ENCODE measurements at regions of chr3 and their contacts with region 1.

Region 1: DNA sequence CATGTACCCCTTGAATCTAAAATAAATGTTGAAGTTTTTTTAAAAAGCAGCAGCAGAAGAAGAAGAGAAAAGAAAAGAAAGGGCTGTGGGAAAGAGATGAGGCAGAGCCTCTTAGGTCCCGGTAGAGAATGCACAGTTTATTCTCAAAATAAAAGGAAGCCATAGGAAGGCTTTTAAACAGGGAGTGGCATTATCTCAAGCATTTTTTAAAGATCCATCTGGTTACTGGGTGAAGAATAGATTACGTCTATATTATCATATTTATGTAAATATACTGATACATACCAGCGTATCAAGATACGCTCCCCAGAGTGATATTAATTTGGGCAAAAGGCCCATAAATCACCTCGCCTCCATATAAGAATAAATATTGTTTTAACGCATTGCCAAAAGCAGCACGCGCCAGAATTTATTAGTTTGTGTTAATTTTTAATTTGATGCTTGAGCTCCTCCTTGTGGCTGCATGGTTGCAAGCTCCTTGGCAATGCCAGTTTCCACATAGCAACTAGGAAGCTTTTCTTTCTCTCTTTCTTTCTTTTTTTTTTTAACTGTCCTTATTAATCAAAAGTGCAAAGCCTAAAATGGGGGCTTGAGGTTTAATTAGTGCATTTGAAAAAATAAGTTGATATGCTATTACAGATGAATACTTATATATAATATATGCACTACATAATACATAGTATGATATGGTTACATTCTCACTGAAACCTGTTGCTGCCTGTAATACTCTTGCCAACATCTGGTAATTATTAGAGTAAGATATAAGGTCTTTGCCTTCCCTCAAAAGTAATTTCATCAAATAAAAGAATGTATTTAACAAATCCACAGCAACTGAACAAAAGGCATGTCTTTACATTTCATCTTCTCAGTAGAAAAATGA is 242.8 kb upstream of the UBE2E2 start:
- DNase-seq: peak in 1 of 3 donors; percentile 2
- H3K4me3 ChIP-seq: no peak overlapping the region
- H3K4me3 Mint-ChIP-seq: no peak overlapping the region
- H3K27ac ChIP-seq: no peak overlapping the region
- H3K27ac Mint-ChIP-seq: no peak overlapping the region
- H3K4me1 ChIP-seq: no peaks in the 10 kb centered on the region
- H3K4me1 Mint-ChIP-seq: no peaks in the 10 kb centered on the region
- H3K27me3 ChIP-seq: no peaks in the 10 kb centered on the region
- H3K27me3 Mint-ChIP-seq: peaks cover 0 to 7% (median 5%) of the 10 kb centered on the region in 3 donors
- CTCF ChIP-seq: peak; percentile 68

Region 2: GRCh38 chr3:22555753-22556435 is 404.5 kb before region 1 on chr3:
- intact Hi-C with region 1: loop called (anchors 5 to 10 kb)
- DNase-seq: no peak
- H3K4me3 ChIP-seq: no peak overlapping the region
- H3K4me3 Mint-ChIP-seq: no peak overlapping the region
- H3K27ac ChIP-seq: no peak overlapping the region
- H3K27ac Mint-ChIP-seq: no peak overlapping the region
- H3K4me1 ChIP-seq: no peaks in the 10 kb centered on the region
- H3K4me1 Mint-ChIP-seq: no peaks in the 10 kb centered on the region
- H3K27me3 ChIP-seq: no peaks in the 10 kb centered on the region
- H3K27me3 Mint-ChIP-seq: peaks cover 0 to 6% (median 0%) of the 10 kb centered on the region in 3 donors
- CTCF ChIP-seq: no peak

Region 3: DNA sequence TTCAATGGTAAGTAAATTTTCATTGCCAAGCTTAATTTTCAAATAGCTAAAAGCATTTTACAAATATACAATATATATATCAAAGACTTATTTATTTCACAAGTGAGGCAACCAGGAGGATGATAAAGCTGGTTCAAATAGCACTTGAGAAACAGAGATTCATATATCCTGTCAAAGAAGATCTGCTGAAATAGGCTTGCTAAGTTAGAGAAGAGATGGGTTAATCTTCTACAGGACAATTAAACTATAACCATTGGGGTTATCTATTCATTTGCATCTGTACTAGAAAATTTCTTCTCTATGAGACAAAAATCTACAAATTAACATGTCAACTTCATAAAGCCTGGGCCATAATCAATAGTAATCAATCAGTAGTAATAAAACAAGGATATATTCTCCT is 395.0 kb before region 1 on chr3:
- intact Hi-C with region 1: loop called (anchors 5 to 10 kb)
- DNase-seq: no peak
- H3K4me3 ChIP-seq: no peak overlapping the region
- H3K4me3 Mint-ChIP-seq: no peak overlapping the region
- H3K27ac ChIP-seq: no peak overlapping the region
- H3K27ac Mint-ChIP-seq: no peak overlapping the region
- H3K4me1 ChIP-seq: no peaks in the 10 kb centered on the region
- H3K4me1 Mint-ChIP-seq: peaks cover 1% of the 10 kb centered on the region
- H3K27me3 ChIP-seq: no peaks in the 10 kb centered on the region
- H3K27me3 Mint-ChIP-seq: peaks cover 0 to 3% (median 2%) of the 10 kb centered on the region in 3 donors
- CTCF ChIP-seq: no peak

Region 4: DNA sequence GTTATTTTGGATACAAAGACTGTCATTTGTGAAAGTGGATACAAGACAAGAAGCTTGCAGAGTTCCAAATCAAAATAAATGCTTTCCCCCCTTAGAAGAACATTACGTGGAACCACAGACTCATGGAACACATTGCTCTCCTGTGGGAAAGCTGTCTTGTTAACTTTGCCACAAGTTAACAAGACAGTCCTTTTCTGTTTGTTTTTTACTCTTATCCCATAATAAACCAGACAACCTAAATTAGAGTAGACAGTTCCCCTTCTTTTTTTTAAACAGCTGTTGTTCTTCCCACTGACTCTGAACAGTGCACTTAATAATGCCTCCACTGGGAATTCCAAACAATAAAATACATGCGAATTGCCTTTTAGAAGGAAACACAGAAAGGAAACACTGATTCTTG is 12.5 kb before region 1 on chr3:
- intact Hi-C with region 1: no loop called
- DNase-seq: no peak
- H3K4me3 ChIP-seq: no peak overlapping the region
- H3K4me3 Mint-ChIP-seq: no peak overlapping the region
- H3K27ac ChIP-seq: no peak overlapping the region
- H3K27ac Mint-ChIP-seq: no peak overlapping the region
- H3K4me1 ChIP-seq: no peaks in the 10 kb centered on the region
- H3K4me1 Mint-ChIP-seq: no peaks in the 10 kb centered on the region
- H3K27me3 ChIP-seq: no peaks in the 10 kb centered on the region
- H3K27me3 Mint-ChIP-seq: no peaks in the 10 kb centered on the region
- CTCF ChIP-seq: no peak

Measured in CD14-positive monocyte (primary cell).